B cell (primary cell): ENCODE measurements at regions of chr2 and their contacts with region 1.

Region 1: GRCh38 chr2:54558188-54559005 is 102.3 kb downstream of the SPTBN1 start:
- DNase-seq: peak; percentile 80
- ATAC-seq: peak; percentile 65
- H3K4me3 ChIP-seq: peak overlapping the region; percentile 91 to 99 (median 97)
- H3K4me3 Mint-ChIP-seq: peak overlapping the region; percentile 94
- H3K27ac ChIP-seq: peak overlapping the region; percentile 81 to 92
- H3K27ac Mint-ChIP-seq: peak overlapping the region; percentile 90
- H3K4me1 ChIP-seq: peaks cover 30 to 35% of the 10 kb centered on the region in 2 donors
- H3K4me1 Mint-ChIP-seq: peaks cover 54% of the 10 kb centered on the region
- H3K27me3 ChIP-seq: no peaks in the 10 kb centered on the region
- H3K27me3 Mint-ChIP-seq: no peaks in the 10 kb centered on the region
- CTCF ChIP-seq: no peak

Region 2: DNA sequence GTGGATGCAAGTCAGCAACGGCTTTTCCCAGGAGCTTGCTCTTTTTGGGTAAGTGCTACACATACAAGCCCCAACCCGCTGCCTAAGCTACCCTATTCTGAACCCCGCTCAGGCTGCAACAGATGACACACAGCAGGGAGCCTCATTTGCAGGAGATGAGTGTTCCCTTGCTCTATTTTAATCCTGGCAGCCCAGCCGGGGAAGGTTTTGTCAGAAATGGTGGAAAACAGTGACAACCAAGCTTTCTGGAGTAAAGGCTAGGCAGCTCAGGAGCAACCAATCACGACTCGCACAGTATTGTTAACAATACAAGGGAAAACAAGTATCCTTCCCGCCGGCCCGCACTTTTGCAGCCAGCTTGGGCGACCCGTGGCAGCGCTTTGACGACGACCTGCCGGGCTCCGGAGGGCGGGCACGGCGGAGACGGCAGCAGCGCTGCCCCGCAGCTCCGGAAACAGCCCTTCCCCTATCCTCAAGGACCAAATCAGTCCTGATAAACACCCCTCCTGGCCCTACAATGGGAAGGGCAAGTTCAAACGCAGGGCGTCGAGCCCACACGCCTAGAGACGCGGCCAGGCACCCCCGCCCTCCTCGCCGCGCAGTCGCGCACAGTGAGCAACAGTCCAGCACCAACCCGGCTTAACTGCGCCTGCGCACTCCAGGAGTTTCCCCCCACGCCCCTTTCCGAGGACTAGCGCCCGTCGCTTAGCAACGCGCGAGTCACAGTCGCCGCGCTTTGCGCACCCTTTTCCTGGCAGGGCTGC is 228.1 kb before region 1 on chr2:
- CTCF ChIA-PET with region 1: no interaction called
- POLR2A ChIA-PET with region 1: no interaction called
- intact Hi-C with region 1: loop called (anchors 5 kb)
- DNase-seq: peak; percentile 93
- ATAC-seq: peak; percentile 94
- H3K4me3 ChIP-seq: peak overlapping the region; percentile 51 to 67 (median 57)
- H3K4me3 Mint-ChIP-seq: peak overlapping the region; percentile 94
- H3K27ac ChIP-seq: peak overlapping the region in 1 of 2 donors; percentile 29
- H3K27ac Mint-ChIP-seq: peak overlapping the region; percentile 91
- H3K4me1 ChIP-seq: peaks cover 21 to 23% of the 10 kb centered on the region in 2 donors
- H3K4me1 Mint-ChIP-seq: peaks cover 18% of the 10 kb centered on the region
- H3K27me3 ChIP-seq: peaks cover 0 to 23% (median 10%) of the 10 kb centered on the region in 4 experiments
- H3K27me3 Mint-ChIP-seq: peaks cover 19% of the 10 kb centered on the region
- CTCF ChIP-seq: no peak

Region 3: DNA sequence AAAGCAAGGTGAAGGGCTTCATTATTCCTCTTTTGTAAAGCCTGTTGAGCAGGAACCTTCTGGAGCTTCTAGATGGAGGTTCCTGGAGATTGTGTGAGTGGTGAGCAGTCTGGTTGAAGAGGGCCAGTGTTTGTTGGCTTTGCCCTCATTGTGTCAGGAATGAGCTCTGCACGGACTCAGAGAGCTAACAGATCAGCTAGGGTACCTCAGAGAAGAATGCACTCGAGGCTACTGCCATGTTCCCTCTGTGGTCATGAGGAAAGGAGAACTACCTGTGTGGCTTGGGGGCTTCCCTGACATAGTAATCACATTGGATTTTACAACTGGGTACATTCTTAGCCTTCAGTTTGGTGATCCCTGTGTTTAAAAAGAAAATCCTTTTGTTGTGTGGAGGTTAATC is 55.7 kb before region 1 on chr2:
- CTCF ChIA-PET with region 1: no interaction called
- POLR2A ChIA-PET with region 1: no interaction called
- intact Hi-C with region 1: no loop called
- DNase-seq: no peak
- ATAC-seq: no peak
- H3K4me3 ChIP-seq: no peak overlapping the region
- H3K4me3 Mint-ChIP-seq: no peak overlapping the region
- H3K27ac ChIP-seq: no peak overlapping the region
- H3K27ac Mint-ChIP-seq: no peak overlapping the region
- H3K4me1 ChIP-seq: no peaks in the 10 kb centered on the region
- H3K4me1 Mint-ChIP-seq: no peaks in the 10 kb centered on the region
- H3K27me3 ChIP-seq: no peaks in the 10 kb centered on the region
- H3K27me3 Mint-ChIP-seq: no peaks in the 10 kb centered on the region
- CTCF ChIP-seq: no peak

Region 4: GRCh38 chr2:54512663-54513362 is 45.6 kb before region 1 on chr2:
- CTCF ChIA-PET with region 1: no interaction called
- POLR2A ChIA-PET with region 1: no interaction called
- intact Hi-C with region 1: no loop called
- DNase-seq: no peak
- ATAC-seq: no peak
- H3K4me3 ChIP-seq: no peak overlapping the region
- H3K4me3 Mint-ChIP-seq: no peak overlapping the region
- H3K27ac ChIP-seq: no peak overlapping the region
- H3K27ac Mint-ChIP-seq: no peak overlapping the region
- H3K4me1 ChIP-seq: no peaks in the 10 kb centered on the region
- H3K4me1 Mint-ChIP-seq: no peaks in the 10 kb centered on the region
- H3K27me3 ChIP-seq: no peaks in the 10 kb centered on the region
- H3K27me3 Mint-ChIP-seq: no peaks in the 10 kb centered on the region
- CTCF ChIP-seq: no peak

Region 5: DNA sequence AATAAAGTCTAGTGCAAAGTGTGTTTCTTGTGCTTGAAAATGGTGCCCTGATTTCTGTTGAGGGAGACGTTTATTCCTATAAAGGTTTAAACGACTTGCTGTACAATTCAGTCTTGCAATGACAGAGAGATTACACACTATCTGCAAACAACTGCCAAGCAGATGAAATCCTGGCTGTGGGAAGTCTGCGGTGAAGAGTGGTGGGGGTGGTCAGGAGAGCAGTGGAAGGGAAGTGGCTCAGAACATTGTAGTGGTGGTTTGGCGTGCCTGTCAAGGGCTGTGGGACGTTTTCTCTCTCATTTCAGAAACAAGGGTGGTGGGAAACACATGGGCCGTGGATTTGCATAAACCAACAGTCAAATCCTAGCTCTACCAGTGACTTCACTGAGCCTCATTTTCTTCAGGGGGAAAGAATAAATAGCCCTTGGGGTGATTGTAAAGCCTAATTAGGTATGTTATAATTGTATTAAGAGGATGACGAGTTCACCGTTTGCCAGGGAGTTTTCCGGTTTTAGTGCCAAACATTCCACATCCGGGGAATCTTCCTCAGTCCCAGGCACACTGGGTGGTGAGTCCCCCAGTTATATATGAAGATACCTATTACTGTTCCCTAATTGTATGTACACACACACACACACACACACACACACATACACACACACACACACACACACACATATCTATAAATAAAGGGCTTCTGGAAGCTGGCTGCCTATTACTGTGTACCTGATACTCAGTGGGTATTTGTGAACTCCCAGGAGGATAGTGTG is 12.7 kb after region 1 on chr2:
- CTCF ChIA-PET with region 1: interaction called, 48 read pairs
- POLR2A ChIA-PET with region 1: interaction called, 26 read pairs
- intact Hi-C with region 1: loop called (anchors 1 kb)
- DNase-seq: peak; percentile 83
- ATAC-seq: peak; percentile 42
- H3K4me3 ChIP-seq: peak overlapping the region in 3 of 5 experiments; percentile 1 to 56 (median 32)
- H3K4me3 Mint-ChIP-seq: peak overlapping the region; percentile 83
- H3K27ac ChIP-seq: peak overlapping the region; percentile 92 to 93
- H3K27ac Mint-ChIP-seq: peak overlapping the region; percentile 97
- H3K4me1 ChIP-seq: peaks cover 92 to 93% of the 10 kb centered on the region in 2 donors
- H3K4me1 Mint-ChIP-seq: peaks cover 92% of the 10 kb centered on the region
- H3K27me3 ChIP-seq: no peaks in the 10 kb centered on the region
- H3K27me3 Mint-ChIP-seq: no peaks in the 10 kb centered on the region
- CTCF ChIP-seq: no peak

Region 6: GRCh38 chr2:54589340-54590215 is 31.2 kb after region 1 on chr2:
- CTCF ChIA-PET with region 1: interaction called, 10 read pairs
- POLR2A ChIA-PET with region 1: interaction called, 9 read pairs
- intact Hi-C with region 1: loop called (anchors 2 kb)
- DNase-seq: no peak
- ATAC-seq: peak; percentile 57
- H3K4me3 ChIP-seq: peak overlapping the region in 3 of 5 experiments; percentile 15 to 38 (median 16)
- H3K4me3 Mint-ChIP-seq: peak overlapping the region; percentile 69
- H3K27ac ChIP-seq: peak overlapping the region; percentile 59 to 67
- H3K27ac Mint-ChIP-seq: peak overlapping the region; percentile 88
- H3K4me1 ChIP-seq: peaks cover 87% of the 10 kb centered on the region in 2 donors
- H3K4me1 Mint-ChIP-seq: peaks cover 94% of the 10 kb centered on the region
- H3K27me3 ChIP-seq: no peaks in the 10 kb centered on the region
- H3K27me3 Mint-ChIP-seq: no peaks in the 10 kb centered on the region
- CTCF ChIP-seq: no peak

Region 7: DNA sequence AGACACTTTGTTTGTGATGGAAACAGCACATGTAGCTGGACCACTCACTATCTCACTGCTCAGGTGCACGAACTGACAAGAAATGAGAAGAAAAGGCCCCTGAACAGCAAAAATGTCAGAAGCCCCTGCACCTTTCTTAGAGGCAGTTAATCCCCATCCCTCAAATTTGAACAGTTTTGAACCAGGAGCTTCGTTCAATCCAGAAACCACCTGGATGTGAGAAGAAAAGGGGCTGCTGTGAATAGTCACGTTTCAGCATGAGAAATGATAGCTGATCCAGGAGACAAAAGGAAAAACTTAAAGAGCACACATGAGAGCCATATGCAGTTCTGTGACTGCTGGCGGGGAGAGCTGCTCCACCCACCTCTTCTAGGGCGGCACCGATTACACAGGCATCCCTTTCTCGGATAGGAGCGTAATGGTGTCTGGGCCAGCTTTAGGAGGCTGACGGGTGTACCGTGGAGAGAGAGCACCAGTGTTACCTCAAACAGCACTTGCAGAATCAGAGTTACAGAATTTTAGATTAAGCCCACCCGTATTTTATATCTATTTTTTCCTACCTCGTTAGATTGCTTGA is 48.1 kb after region 1 on chr2:
- CTCF ChIA-PET with region 1: interaction called, 13 read pairs
- POLR2A ChIA-PET with region 1: interaction called, 5 read pairs
- intact Hi-C with region 1: no loop called
- DNase-seq: no peak
- ATAC-seq: no peak
- H3K4me3 ChIP-seq: no peak overlapping the region
- H3K4me3 Mint-ChIP-seq: no peak overlapping the region
- H3K27ac ChIP-seq: no peak overlapping the region
- H3K27ac Mint-ChIP-seq: no peak overlapping the region
- H3K4me1 ChIP-seq: peaks cover 53 to 64% of the 10 kb centered on the region in 2 donors
- H3K4me1 Mint-ChIP-seq: peaks cover 82% of the 10 kb centered on the region
- H3K27me3 ChIP-seq: no peaks in the 10 kb centered on the region
- H3K27me3 Mint-ChIP-seq: no peaks in the 10 kb centered on the region
- CTCF ChIP-seq: no peak

Region 8: DNA sequence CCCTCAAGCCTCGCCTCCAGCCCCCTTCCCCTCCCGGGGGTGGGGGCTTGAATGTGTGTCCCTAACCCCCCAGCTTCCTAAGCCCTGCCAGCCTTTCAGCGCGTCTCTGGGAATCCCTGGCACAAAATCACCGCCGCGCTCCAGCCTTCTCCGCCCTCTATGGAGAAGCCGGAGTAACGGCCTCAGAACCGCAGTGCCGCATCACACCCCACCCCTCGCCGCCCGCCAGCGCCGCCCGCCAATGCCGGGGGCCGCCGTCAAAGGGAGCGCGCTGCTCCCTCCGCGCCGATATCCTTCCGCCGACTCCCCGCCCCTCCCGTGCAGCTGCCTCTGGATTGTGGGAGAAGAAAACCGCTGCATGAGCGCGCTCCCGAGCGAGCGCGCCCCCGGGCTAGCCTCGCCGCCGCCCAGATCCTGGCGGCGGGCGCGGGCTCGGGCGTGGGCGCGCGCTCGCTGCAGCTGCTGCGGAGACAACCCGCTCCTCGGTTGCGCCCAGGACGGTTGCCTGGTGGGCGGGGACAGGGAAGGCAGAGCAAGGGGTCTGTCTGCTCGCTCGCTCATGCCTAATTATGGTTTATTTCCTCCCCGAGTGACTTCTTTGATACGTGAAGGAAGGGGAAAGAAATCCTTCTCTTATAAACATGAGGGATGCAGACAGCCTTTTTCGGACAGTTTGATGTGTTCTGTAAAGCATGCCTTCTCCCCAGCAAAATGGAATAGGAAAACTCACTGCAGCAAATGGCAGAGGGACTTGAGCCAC is 861.5 kb after region 1 on chr2 and contains the start of gene CCDC88A:
- CTCF ChIA-PET with region 1: no interaction called
- POLR2A ChIA-PET with region 1: no interaction called
- intact Hi-C with region 1: no loop called
- DNase-seq: peak; percentile 95
- ATAC-seq: peak; percentile 85
- H3K4me3 ChIP-seq: peak within 1 kb of the TSS; percentile 65 to 91 (median 82)
- H3K4me3 Mint-ChIP-seq: peak within 1 kb of the TSS; percentile 95
- H3K27ac ChIP-seq: peak within 1 kb of the TSS; percentile 68 to 73
- H3K27ac Mint-ChIP-seq: peak within 1 kb of the TSS; percentile 95
- H3K4me1 ChIP-seq: peaks cover 20 to 25% of the 10 kb centered on the region in 2 donors
- H3K4me1 Mint-ChIP-seq: peaks cover 38% of the 10 kb centered on the region
- H3K27me3 ChIP-seq: peaks cover 0 to 4% (median 0%) of the 10 kb centered on the region in 4 experiments
- H3K27me3 Mint-ChIP-seq: no peaks in the 10 kb centered on the region
- CTCF ChIP-seq: no peak
- total RNA-seq, gene CCDC88A: 26.0 and 27.6 TPM in 2 replicates